Left cardiac atrium (tissue), 4 donors: ENCODE measurements at regions of chr17 and their contacts with region 1.

Region 1: GRCh38 chr17:67671492-67671891 is 46.2 kb upstream of the NOL11 start:
- DNase-seq: peak; percentile 49
- ATAC-seq: no peak

Region 2: GRCh38 chr17:67575325-67575724 is 96.2 kb before region 1 on chr17:
- intact Hi-C with region 1: loop called in 1 of 2 experiments (anchors 10 kb)
- DNase-seq: no peak
- ATAC-seq: no peak